ENCODE measurements at regions of chr16 and their contacts with region 1.

Region 1: DNA sequence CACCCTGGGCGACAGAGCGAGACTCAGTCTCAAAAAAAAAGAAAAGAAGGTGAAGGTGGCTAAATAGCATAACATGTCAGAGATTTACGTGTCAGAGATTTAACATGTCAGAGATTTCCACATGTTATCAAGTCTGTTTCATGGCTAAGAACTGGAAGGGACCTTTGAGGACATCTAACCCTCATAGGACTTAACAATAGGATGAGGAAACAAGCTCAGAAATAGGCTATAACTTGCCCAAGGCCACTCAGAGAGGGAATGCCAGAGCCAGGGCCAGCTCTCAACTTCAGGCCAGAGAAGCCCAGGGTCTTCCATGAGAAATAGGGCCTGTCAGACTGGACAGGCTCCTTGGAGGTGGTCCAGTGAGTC is 26.8 kb upstream of the ZNF629 start:
- DNase-seq: no peak
- H3K4me3 ChIP-seq: peak overlapping the region; percentile 61
- H3K27ac ChIP-seq: peak overlapping the region; percentile 13
- H3K4me1 ChIP-seq: peaks cover 14% of the 10 kb centered on the region
- CTCF ChIP-seq: no peak

Region 2: DNA sequence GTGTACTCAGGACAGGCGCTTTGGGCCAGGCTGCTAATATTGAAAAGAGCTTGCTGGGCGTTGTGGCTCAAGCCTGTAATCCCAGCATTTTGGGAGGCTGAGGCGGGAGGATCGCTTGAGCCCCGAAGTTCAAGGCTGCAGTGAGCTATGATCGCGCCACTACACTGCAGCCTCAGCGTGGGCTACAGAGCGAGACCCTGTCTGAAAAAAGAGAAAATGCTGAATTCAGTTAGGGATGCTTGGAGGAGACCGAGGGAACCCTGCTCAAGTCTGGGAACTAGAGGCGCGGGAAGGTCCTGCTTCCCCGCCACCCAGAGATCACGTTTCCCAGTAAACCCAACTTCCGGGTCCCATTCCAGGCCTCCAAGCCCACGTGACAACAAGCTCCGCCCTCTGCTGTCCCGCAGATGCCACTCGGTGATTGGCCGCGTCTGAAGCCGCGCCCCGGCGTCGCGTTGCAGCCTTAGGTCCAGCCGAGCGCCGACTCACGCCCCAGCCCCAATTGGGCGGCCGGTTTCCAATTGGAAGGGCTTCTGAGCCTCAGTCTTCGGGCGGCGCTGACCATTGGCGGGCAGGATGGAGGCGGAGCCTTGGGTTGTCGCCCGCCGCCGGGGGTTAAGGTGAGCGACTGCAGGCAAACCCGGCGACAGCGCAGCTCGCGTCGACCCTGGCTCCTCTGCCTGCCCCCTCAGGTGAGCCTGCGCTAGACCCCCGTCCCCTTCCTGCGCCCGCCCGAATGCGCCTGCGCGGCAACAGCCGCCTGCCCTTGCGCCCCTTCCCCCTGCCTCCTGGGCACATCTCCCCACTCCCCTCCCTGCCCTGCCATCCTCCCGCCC is 65.8 kb before region 1 on chr16 and contains the start of gene PHKG2:
- CTCF ChIA-PET with region 1: no interaction called
- POLR2A ChIA-PET with region 1: interaction called, 9 read pairs
- intact Hi-C with region 1: loop called (anchors 1 kb)
- DNase-seq: peak; percentile 99
- H3K4me3 ChIP-seq: peak within 1 kb of the TSS; percentile 87
- H3K27ac ChIP-seq: peak within 1 kb of the TSS; percentile 40
- H3K4me1 ChIP-seq: peaks cover 15% of the 10 kb centered on the region
- CTCF ChIP-seq: no peak
- total RNA-seq, gene PHKG2: 37.6 and 40.5 TPM in 2 replicates

Measured in OCI-LY7 (cell line).